ENCODE measurements at regions of chr16 and their contacts with region 1.

Region 1: GRCh38 chr16:10447289-10447688 is 61.4 kb downstream of the ATF7IP2 start:
- DNase-seq: no peak
- ATAC-seq: no peak
- H3K4me3 ChIP-seq: no peak overlapping the region
- H3K27ac ChIP-seq: no peak overlapping the region
- H3K4me1 ChIP-seq: no peaks in the 10 kb centered on the region
- H3K27me3 ChIP-seq: no peaks in the 10 kb centered on the region
- CTCF ChIP-seq: no peak

Region 2: GRCh38 chr16:10497132-10498101 is 50.1 kb after region 1 on chr16:
- intact Hi-C with region 1: loop called in 1 of 10 experiments (anchors 10 kb)
- DNase-seq: no peak
- ATAC-seq: no peak
- H3K4me3 ChIP-seq: no peak overlapping the region
- H3K27ac ChIP-seq: no peak overlapping the region
- H3K4me1 ChIP-seq: no peaks in the 10 kb centered on the region
- H3K27me3 ChIP-seq: no peaks in the 10 kb centered on the region
- CTCF ChIP-seq: no peak